A673 (cell line): ENCODE measurements at regions of chr17 and their contacts with region 1.

Region 1: DNA sequence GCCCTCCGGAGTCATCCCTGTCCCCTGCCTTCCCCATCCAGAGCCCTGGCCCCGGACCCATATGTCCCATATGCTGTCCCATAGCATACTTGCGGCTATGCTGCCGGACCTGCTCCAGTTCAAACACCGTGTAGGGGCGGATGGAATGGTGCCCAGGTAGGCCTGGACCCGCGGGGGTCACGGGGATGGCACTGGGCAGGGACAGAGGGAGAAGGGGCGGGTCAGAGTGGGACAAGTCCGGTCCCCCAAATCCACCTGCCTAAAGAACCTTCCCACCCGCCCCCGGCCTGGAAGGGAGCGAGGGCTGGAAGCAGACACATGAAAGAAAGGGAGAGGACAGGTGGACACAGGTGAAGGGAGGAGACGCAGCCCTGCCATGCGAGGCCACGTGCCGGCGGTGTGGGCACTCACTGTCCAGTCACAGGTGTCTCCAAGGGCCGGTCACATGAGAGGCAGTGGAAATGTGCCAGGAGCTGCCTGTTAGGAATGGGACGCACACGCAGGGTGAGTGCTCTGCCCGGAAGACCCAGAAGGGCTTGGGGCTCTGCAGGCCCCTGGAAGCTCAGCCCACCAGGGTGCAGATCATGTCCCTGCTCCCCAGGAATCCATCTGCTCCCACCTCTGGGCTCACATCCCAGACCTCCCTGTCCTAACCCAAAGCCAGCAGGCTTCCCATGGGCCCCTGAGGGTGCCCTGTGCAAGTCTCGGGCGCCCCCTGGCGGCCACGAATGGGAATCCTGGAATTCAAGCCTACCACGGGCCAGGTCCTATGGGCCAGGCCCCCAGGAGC is 14.0 kb downstream of the UBALD2 start:
- DNase-seq: peak; percentile 86
- H3K4me3 ChIP-seq: no peak overlapping the region
- H3K27ac ChIP-seq: no peak overlapping the region
- H3K4me1 ChIP-seq: no peaks in the 10 kb centered on the region
- H3K27me3 ChIP-seq: no peaks in the 10 kb centered on the region
- CTCF ChIP-seq: peak; percentile 97

Region 2: GRCh38 chr17:76014184-76014924 is 264.8 kb before region 1 on chr17:
- CTCF ChIA-PET with region 1: interaction called, 21 read pairs
- POLR2A ChIA-PET with region 1: no interaction called
- intact Hi-C with region 1: loop called (anchors 1 kb)
- DNase-seq: peak; percentile 81
- H3K4me3 ChIP-seq: peak overlapping the region; percentile 13
- H3K27ac ChIP-seq: no peak overlapping the region
- H3K4me1 ChIP-seq: peaks cover 4% of the 10 kb centered on the region
- H3K27me3 ChIP-seq: no peaks in the 10 kb centered on the region
- CTCF ChIP-seq: peak; percentile 98

Region 3: DNA sequence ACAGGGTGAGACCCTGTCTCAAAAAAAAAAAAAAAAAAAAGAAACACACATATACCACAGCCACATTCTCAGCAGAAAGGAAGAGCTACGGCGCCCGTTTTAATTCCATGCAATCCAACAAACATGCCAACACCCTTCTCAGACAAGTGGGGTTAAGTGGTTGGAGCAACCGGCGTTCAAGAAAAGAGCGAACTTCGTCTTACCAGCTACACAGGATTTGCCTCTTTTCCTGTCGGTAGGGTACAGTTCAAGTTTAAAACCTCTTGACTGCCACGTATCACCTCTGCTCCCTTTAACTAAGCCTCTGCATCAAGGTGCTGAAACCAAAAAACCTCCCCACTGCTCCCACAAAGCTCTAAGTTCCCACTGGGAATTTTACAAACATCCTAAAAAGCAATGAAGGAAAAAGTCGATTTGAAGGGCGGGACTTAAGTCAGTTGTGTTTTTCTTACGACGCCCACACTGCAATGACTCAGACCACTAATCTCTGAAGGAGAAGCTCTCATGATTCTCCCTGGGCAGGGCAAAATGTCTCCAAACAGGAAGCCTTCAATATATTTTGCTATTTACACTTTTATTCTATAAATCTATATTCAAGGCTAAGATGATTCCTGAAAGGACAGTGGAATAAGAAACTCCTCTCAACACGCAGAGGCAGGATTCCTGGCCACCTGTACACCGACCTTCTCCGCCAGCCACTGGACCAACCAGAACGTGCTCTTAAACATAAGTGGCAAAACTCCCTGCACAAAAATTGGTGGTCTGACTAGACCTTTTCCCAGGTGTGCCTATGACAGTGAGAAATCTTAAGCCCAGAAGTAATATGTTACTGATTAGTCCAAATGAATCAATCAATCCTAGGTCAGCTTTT is 225.7 kb before region 1 on chr17:
- CTCF ChIA-PET with region 1: no interaction called
- POLR2A ChIA-PET with region 1: no interaction called
- intact Hi-C with region 1: no loop called
- DNase-seq: peak; percentile 75
- H3K4me3 ChIP-seq: no peak overlapping the region
- H3K27ac ChIP-seq: peak overlapping the region; percentile 47
- H3K4me1 ChIP-seq: peaks cover 10% of the 10 kb centered on the region
- H3K27me3 ChIP-seq: no peaks in the 10 kb centered on the region
- CTCF ChIP-seq: no peak

Region 4: DNA sequence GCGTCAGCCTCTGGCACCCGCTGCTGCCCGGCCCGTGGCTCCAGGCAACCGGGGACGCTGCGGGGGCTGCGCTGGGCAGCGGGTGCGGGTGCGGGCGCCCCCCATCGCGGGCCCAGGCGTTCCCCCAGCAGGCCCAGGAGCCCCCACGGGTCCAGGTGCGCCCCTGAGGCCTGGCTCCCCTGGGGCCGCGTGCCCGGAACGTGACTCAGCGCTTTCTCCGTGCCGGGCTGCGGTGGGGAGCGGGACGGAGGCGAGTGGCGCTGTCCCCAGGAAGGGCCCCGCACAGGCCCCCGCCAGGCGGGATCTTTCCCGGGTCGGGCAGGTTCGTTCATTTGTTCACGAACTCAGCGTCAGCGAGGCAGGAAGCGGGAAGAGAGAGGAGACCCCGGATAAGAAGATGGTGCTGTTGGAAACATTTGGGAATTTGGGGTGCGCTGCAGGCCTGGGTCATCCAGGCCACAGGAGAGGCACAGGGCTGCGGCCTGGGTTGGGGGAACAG is 157.2 kb before region 1 on chr17:
- CTCF ChIA-PET with region 1: interaction called, 7 read pairs
- POLR2A ChIA-PET with region 1: no interaction called
- intact Hi-C with region 1: loop called (anchors 1 kb)
- DNase-seq: no peak
- H3K4me3 ChIP-seq: no peak overlapping the region
- H3K27ac ChIP-seq: peak overlapping the region; percentile 61
- H3K4me1 ChIP-seq: no peaks in the 10 kb centered on the region
- H3K27me3 ChIP-seq: no peaks in the 10 kb centered on the region
- CTCF ChIP-seq: no peak

Region 5: DNA sequence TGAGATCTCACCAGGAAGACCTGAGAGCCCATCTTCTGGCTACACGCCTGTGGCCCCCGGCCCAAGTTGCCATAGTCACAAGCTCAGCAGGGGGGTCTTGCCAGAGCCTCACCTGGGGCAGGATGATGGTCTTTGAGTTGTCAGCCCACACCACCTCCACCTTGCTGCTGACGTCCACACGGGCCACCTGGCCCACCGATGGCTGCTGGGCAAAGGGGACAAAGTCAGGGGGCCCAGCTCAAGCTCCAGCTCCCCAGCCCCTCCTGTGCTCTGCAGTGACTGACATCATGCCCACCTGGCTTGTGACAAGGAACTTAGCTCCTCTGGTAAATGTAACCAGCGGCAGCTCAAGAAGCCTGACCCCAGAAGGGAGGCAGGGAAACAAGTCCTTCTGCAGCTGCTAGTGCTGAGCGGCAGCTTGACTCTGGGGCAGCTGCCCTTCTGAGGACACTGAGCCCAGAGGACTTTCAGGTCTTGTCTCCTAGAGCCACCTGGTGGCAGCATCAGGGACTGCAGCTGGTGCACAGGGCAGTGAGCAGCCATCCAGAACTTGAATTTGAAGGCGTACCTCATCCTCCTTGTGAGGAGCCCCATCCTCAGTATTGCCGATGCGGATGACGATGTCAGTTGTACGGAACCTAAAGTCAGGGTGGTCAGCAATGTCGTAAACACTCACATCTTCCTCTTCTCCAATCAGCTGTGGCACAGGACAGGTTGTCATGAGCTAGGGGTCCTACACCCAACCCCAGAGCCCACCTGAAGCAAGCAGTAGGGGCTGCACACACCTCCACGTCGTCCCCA is 118.7 kb after region 1 on chr17:
- CTCF ChIA-PET with region 1: no interaction called
- POLR2A ChIA-PET with region 1: no interaction called
- intact Hi-C with region 1: no loop called
- DNase-seq: peak; percentile 87
- H3K4me3 ChIP-seq: no peak overlapping the region
- H3K27ac ChIP-seq: no peak overlapping the region
- H3K4me1 ChIP-seq: no peaks in the 10 kb centered on the region
- H3K27me3 ChIP-seq: no peaks in the 10 kb centered on the region
- CTCF ChIP-seq: peak; percentile 96